Activated naive CD4-positive, alpha-beta T cell treated with anti-CD3 and anti-CD28 coated beads for 36 hours (primary cell): ENCODE measurements at regions of chr1 and their contacts with region 1.

Region 1: GRCh38 chr1:211305044-211305443 is 21.6 kb upstream of the TRAF5 start:
- DNase-seq: peak; percentile 73
- H3K4me3 Mint-ChIP-seq: no peak overlapping the region
- H3K27ac Mint-ChIP-seq: peak overlapping the region; percentile 25
- H3K4me1 Mint-ChIP-seq: peaks cover 35% of the 10 kb centered on the region
- H3K27me3 Mint-ChIP-seq: no peaks in the 10 kb centered on the region

Region 2: DNA sequence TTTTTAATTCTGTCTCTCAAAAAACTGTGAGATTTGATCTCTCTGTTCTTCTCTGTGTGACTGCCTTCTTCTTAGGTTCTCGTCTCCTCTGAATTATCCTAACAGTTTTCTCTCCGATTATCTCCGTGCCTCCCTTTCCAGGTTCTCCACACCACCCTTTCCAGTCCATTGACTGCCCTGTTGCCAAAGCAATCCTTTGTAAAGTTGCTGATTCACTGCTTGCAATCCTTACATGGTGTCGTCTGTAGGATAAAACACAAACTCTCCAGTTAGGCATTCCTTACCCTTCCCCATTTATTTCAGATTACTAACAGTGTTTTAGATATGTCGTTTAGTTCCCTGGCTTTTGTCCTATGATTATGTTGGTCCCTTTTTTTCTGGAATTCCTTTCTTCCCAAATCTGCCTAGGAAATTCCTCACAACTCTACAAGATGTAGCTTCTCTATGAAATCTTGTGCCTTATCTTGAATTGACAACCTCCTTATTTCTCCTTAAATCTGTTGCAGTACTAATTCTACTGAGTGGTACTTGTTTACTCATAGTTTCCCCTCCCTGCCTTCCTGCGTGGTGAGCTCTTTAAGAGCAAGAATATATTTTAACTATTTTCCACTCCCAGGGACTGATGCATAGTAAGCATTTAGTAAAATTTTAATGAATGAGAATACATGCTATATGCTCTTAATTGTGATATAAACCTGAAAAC is 23.6 kb before region 1 on chr1:
- CTCF ChIA-PET with region 1: no interaction called
- intact Hi-C with region 1: loop called (anchors 1 kb)
- DNase-seq: no peak
- H3K4me3 Mint-ChIP-seq: no peak overlapping the region
- H3K27ac Mint-ChIP-seq: no peak overlapping the region
- H3K4me1 Mint-ChIP-seq: peaks cover 2% of the 10 kb centered on the region
- H3K27me3 Mint-ChIP-seq: no peaks in the 10 kb centered on the region